ENCODE measurements at regions of chr20 and their contacts with region 1.

Region 1: GRCh38 chr20:63520504-63520933 is at the start of gene PPDPF:
- DNase-seq: no peak
- ATAC-seq: peak; percentile 77
- H3K4me3 ChIP-seq: peak within 1 kb of the TSS; percentile 89 to 97
- H3K27ac ChIP-seq: peak within 1 kb of the TSS; percentile 98
- H3K4me1 ChIP-seq: peaks cover 5 to 40% of the 10 kb centered on the region in 2 experiments; a peak in 3 of 4 replicates
- H3K27me3 ChIP-seq: no peaks in the 10 kb centered on the region
- CTCF ChIP-seq: no peak
- POLR2A ChIP-seq: peak; percentile 81
- RAD21 ChIP-seq: no peak
- total RNA-seq, gene PPDPF: 346 TPM

Region 2: DNA sequence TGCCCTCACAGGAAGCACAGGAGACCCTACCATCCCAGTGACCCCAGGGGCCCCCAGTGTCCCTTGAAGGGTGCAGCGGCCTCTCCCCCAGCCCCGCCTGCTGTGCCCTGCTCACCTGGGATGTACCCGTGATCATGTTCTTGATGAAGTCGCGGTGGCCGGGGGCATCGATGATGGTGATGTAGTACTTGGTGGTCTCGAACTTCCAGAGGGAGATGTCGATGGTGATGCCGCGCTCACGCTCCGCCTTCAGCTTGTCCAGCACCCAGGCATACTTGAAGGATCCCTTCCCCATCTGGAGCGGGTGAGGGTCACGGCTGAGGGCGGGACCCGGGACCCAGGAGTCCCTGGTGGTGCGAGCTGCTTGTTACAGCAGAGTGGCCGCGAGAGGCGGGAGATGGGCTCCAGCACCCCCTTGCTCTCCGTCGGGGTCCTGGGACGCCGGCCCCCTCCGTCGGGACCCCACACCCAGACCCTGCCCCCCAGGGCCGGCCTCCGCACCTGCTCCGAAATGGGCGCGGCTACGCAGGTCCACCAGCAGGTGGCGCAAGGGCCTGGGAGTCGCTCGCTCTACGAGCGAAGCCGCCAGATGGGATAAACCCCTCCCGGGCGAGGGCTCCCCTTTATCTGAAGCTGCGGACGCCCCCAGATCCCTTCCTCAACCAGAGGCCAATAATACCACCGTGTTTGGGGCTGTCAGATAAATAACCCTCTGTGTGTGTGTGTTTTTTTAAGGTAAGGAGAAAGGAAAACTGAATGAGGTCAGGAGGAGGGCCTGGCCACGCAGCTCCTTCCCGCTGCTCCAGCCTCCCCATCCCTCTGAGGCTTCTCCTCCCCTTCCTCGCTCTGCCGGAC is 24.6 kb before region 1 on chr20:
- CTCF ChIA-PET with region 1: interaction called, 5 read pairs
- POLR2A ChIA-PET with region 1: interaction called, 10 read pairs
- RAD21 ChIA-PET with region 1: interaction called in 1 of 2 experiments, 3 read pairs
- intact Hi-C with region 1: no loop called
- DNase-seq: no peak
- ATAC-seq: peak; percentile 44
- H3K4me3 ChIP-seq: no peak overlapping the region
- H3K27ac ChIP-seq: peak overlapping the region; percentile 77
- H3K4me1 ChIP-seq: peaks cover 17 to 32% of the 10 kb centered on the region in 2 experiments
- H3K27me3 ChIP-seq: no peaks in the 10 kb centered on the region
- CTCF ChIP-seq: peak in 2 of 3 experiments; percentile 84 to 90; a peak in 4 of 6 replicates
- POLR2A ChIP-seq: no peak
- RAD21 ChIP-seq: no peak

Region 3: GRCh38 chr20:63772781-63773518 is 252.4 kb after region 1 on chr20:
- CTCF ChIA-PET with region 1: no interaction called
- POLR2A ChIA-PET with region 1: no interaction called
- RAD21 ChIA-PET with region 1: no interaction called
- intact Hi-C with region 1: no loop called
- DNase-seq: no peak
- ATAC-seq: no peak
- H3K4me3 ChIP-seq: no peak overlapping the region
- H3K27ac ChIP-seq: no peak overlapping the region
- H3K4me1 ChIP-seq: peaks cover 5 to 8% of the 10 kb centered on the region in 2 experiments
- H3K27me3 ChIP-seq: no peaks in the 10 kb centered on the region
- CTCF ChIP-seq: no peak
- POLR2A ChIP-seq: no peak
- RAD21 ChIP-seq: no peak

Region 4: GRCh38 chr20:63830841-63831588 is 310.5 kb after region 1 on chr20 and contains the start of gene ZBTB46:
- CTCF ChIA-PET with region 1: no interaction called
- POLR2A ChIA-PET with region 1: no interaction called
- RAD21 ChIA-PET with region 1: no interaction called
- intact Hi-C with region 1: no loop called
- DNase-seq: no peak
- ATAC-seq: peak; percentile 49
- H3K4me3 ChIP-seq: peak within 1 kb of the TSS; percentile 38 to 59
- H3K27ac ChIP-seq: peak within 1 kb of the TSS; percentile 51; the same call in 1 of the 2 replicates
- H3K4me1 ChIP-seq: peaks cover 19 to 49% of the 10 kb centered on the region in 2 experiments
- H3K27me3 ChIP-seq: no peaks in the 10 kb centered on the region
- CTCF ChIP-seq: no peak
- POLR2A ChIP-seq: no peak
- RAD21 ChIP-seq: no peak
- total RNA-seq, gene ZBTB46: 10.7 TPM

Measured in HCT116 (cell line).